OCI-LY7 (cell line): ENCODE measurements at regions of chr10 and their contacts with region 1.

Region 1: DNA sequence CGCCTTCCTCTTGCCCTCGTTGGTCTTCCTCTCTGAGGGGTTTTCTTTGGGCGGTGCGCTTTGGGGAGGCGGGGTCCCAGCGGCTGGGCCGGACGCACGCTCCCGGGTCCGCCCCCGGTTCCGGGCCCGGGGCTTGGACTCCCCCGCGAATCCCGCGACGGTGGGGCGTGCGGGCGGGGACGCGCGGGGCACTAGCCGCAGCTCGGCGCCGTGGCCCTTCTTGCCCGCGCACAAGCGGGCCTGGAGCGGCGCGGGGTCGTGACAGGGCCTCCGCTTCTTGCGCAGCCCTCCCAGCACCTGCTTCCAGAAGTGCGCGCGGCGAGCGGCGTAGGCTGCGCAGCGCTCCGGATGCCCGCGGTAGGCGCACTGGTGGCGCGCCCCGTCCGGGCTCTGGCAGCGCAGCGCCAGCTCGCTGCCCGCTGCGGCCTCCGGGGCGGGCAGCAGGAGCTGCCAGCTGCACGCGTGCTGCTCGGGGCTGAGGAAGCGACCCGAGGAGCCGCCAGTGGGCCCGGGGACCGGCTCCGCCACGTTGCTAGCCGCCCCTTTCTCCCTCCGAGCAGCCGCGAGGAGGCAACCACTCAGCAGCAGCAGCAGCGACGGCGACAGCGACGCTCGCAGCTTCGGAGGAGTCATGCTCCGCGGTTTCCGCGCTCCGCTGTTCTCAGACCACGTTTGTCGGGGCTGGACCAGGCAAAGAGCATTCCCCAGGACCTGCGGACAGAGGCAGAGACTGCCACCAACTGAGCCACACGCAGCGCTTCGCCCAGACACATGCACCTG is 759 bp downstream of the FGFBP3 start:
- DNase-seq: peak; percentile 91
- H3K4me3 ChIP-seq: peak overlapping the region; percentile 84
- H3K27ac ChIP-seq: peak overlapping the region; percentile 52
- H3K4me1 ChIP-seq: peaks cover 19% of the 10 kb centered on the region
- CTCF ChIP-seq: peak; percentile 75

Region 2: DNA sequence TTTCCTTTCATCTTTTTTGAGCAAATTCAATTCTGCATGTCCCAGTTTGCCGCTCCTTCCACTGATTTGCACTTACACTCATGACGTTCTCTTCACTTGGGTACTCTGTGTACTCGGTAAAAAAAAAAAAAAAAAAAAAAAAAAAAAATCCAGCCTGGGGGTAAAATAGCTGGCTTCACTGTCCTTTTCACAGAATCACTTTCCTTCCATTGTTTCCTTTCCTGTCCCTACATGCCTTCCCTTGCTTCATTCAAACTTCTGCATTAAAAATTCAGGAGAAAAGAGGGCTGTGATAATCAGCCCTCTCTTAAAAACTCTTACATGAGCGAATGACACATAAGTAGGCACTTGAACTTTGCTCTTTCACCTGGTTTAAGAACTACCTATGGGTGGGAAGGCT is 996.4 kb before region 1 on chr10:
- CTCF ChIA-PET with region 1: no interaction called
- POLR2A ChIA-PET with region 1: no interaction called
- intact Hi-C with region 1: loop called (anchors 10 kb)
- DNase-seq: no peak
- H3K4me3 ChIP-seq: no peak overlapping the region
- H3K27ac ChIP-seq: no peak overlapping the region
- H3K4me1 ChIP-seq: no peaks in the 10 kb centered on the region
- CTCF ChIP-seq: no peak

Region 3: GRCh38 chr10:91389636-91390512 is 518.7 kb before region 1 on chr10:
- CTCF ChIA-PET with region 1: interaction called, 5 read pairs
- POLR2A ChIA-PET with region 1: interaction called, 3 read pairs
- intact Hi-C with region 1: loop called (anchors 2 kb)
- DNase-seq: peak; percentile 84
- H3K4me3 ChIP-seq: no peak overlapping the region
- H3K27ac ChIP-seq: no peak overlapping the region
- H3K4me1 ChIP-seq: no peaks in the 10 kb centered on the region
- CTCF ChIP-seq: peak; percentile 82

Region 4: GRCh38 chr10:91758303-91759146 is 150.0 kb before region 1 on chr10:
- CTCF ChIA-PET with region 1: no interaction called
- POLR2A ChIA-PET with region 1: no interaction called
- intact Hi-C with region 1: loop called (anchors 1 kb)
- DNase-seq: peak; percentile 72
- H3K4me3 ChIP-seq: no peak overlapping the region
- H3K27ac ChIP-seq: no peak overlapping the region
- H3K4me1 ChIP-seq: no peaks in the 10 kb centered on the region
- CTCF ChIP-seq: peak; percentile 86

Region 5: GRCh38 chr10:91856637-91857036 is 51.9 kb before region 1 on chr10:
- CTCF ChIA-PET with region 1: no interaction called
- POLR2A ChIA-PET with region 1: no interaction called
- intact Hi-C with region 1: no loop called
- DNase-seq: peak; percentile 5
- H3K4me3 ChIP-seq: no peak overlapping the region
- H3K27ac ChIP-seq: no peak overlapping the region
- H3K4me1 ChIP-seq: no peaks in the 10 kb centered on the region
- CTCF ChIP-seq: peak; percentile 70

Region 6: DNA sequence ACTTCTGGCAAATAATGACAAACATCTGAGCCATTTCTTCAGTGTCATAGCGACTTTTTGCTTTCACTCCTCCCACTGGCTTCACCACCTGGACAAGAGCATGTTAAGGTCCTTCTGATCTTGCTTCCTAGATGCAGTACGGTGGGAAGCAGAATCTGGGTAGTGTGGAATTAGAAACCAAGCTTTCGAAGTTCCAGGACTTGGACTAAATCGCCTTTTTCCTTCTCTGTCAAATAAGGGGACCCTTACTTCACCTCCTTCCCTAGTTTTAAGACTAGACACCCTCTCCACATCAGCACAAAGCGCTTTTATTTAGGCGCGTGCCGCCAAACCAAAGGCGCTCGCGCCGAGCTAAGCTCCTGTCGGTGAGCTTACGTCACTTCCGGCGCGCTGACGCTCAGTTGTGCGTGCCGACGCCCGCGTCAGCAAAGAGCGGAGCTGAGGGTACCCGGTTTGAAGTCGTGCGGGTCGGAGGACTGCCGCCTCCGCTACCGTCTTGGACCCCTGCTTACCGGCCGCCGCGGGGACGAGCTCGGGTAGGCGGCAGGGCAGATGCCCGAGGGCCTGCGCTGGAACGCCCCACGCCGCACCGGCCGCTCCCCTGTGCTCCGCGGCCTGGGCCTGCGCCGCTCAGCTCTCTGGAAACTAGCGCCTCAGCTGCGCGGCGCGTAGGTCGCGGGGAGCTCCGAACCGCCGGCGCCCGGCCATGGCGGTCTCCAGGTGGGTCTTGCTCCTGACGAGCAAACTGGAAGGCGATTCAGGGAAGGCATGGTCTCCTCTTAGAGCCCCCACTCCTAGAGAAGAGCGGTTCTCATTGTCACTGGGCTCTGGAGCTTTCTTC is 15.1 kb after region 1 on chr10 and contains the start of gene BTAF1:
- CTCF ChIA-PET with region 1: interaction called, 5 read pairs
- POLR2A ChIA-PET with region 1: interaction called, 13 read pairs
- intact Hi-C with region 1: loop called (anchors 2 kb)
- DNase-seq: peak; percentile 97
- H3K4me3 ChIP-seq: peak within 1 kb of the TSS; percentile 82
- H3K27ac ChIP-seq: peak within 1 kb of the TSS; percentile 73
- H3K4me1 ChIP-seq: peaks cover 27% of the 10 kb centered on the region
- CTCF ChIP-seq: no peak
- total RNA-seq, gene BTAF1: 95.6 and 100 TPM in 2 replicates